Activated T-helper 2 cell treated with anti-CD3 and anti-CD28 coated beads, Interferon-gamma antibody, Interleukin-2, Interleukin-4, amounts not matched to agents 10 μg/mL and 5 μg/mL and 100 μg/mL, durations not matched to agents 14 hours and 24 hours and 36 hours (primary cell): ENCODE measurements at regions of chr15 and their contacts with region 1.

Region 1: GRCh38 chr15:81274931-81275707 is 48.8 kb downstream of the STARD5 start:
- DNase-seq: peak; percentile 74
- H3K4me3 Mint-ChIP-seq: no peak overlapping the region
- H3K27ac Mint-ChIP-seq: peak overlapping the region; percentile 3
- H3K4me1 Mint-ChIP-seq: peaks cover 20% of the 10 kb centered on the region
- H3K27me3 Mint-ChIP-seq: no peaks in the 10 kb centered on the region

Region 2: GRCh38 chr15:80870893-80871292 is 404.2 kb before region 1 on chr15:
- intact Hi-C with region 1: no loop called
- DNase-seq: no peak
- H3K4me3 Mint-ChIP-seq: no peak overlapping the region
- H3K27ac Mint-ChIP-seq: no peak overlapping the region
- H3K4me1 Mint-ChIP-seq: no peaks in the 10 kb centered on the region
- H3K27me3 Mint-ChIP-seq: no peaks in the 10 kb centered on the region

Region 3: DNA sequence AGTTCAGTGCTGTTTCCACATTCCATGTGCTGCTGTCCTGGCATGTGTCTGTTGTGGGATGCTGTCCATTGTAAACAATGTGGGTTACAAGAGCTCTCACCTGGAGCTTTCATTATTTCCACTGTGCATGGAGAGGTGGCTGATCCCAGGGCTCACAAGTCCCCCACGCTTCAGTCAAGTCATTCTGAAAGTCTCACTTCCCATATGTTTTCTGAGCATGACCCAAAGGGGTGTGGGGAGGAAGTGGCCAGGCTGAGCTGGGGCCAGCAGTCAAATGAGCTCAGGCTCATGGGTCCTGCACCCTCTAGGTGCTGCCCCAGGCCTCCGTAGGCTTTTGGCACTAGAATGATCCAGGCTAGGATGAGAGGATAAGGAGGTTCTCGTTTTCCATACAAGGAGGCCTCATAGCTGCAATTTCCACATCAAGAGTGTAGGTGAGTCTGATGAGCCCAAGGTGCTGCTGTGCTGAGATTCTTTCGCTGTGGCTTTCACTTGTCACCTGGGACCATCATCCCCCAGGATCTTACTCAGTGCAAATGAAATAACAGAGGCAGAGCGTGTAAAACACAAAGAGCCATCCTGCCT is 26.8 kb after region 1 on chr15:
- intact Hi-C with region 1: loop called (anchors 2 kb)
- DNase-seq: no peak
- H3K4me3 Mint-ChIP-seq: peak overlapping the region; percentile 96
- H3K27ac Mint-ChIP-seq: peak overlapping the region; percentile 69
- H3K4me1 Mint-ChIP-seq: peaks cover 84% of the 10 kb centered on the region
- H3K27me3 Mint-ChIP-seq: no peaks in the 10 kb centered on the region

Region 4: GRCh38 chr15:81323944-81324881 is 49.1 kb after region 1 on chr15 and contains the start of gene STARD5:
- intact Hi-C with region 1: loop called (anchors 5 kb)
- DNase-seq: peak; percentile 95
- H3K4me3 Mint-ChIP-seq: peak within 1 kb of the TSS; percentile 95
- H3K27ac Mint-ChIP-seq: peak within 1 kb of the TSS; percentile 75
- H3K4me1 Mint-ChIP-seq: peaks cover 20% of the 10 kb centered on the region
- H3K27me3 Mint-ChIP-seq: no peaks in the 10 kb centered on the region
- total RNA-seq, gene STARD5: 3.3 and 4.5 TPM in 2 replicates

Region 5: GRCh38 chr15:81336568-81336967 is 61.4 kb after region 1 on chr15:
- intact Hi-C with region 1: loop called (anchors 1 kb)
- DNase-seq: no peak
- H3K4me3 Mint-ChIP-seq: no peak overlapping the region
- H3K27ac Mint-ChIP-seq: no peak overlapping the region
- H3K4me1 Mint-ChIP-seq: peaks cover 2% of the 10 kb centered on the region
- H3K27me3 Mint-ChIP-seq: peaks cover 9% of the 10 kb centered on the region

Region 6: GRCh38 chr15:81400640-81401236 is 125.6 kb after region 1 on chr15:
- intact Hi-C with region 1: loop called (anchors 1 kb)
- DNase-seq: no peak
- H3K4me3 Mint-ChIP-seq: no peak overlapping the region
- H3K27ac Mint-ChIP-seq: no peak overlapping the region
- H3K4me1 Mint-ChIP-seq: peaks cover 2% of the 10 kb centered on the region
- H3K27me3 Mint-ChIP-seq: peaks cover 12% of the 10 kb centered on the region

Region 7: DNA sequence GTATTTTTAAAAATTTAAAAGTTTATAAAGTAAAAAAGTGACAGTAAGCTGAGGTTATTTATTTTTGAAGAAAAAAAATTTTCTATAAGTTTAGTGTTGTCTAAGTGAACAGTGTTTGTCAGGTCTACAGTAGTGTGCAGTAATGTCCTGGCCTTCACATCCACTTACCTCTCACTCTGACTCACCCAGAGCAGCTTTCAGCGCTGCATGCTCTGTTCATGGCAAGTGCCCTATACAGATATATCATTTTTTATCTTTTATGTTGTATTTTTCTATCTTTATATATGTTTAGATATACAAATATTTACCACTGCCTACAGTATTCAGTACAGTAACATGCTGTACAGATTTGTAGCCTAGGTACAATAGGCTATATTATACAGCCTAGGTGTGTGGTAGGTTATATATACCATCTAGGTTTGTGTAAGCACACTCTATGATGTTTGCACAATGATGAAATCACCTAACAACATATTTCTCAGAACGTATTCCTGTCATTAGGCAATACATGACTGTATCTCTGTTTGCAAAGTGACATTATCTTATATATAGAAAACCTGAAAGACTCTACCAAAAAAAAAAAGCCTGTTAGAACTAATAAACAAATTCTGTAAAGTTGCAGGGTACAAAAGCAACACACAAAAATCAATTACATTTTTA is 174.8 kb after region 1 on chr15:
- intact Hi-C with region 1: no loop called
- DNase-seq: no peak
- H3K4me3 Mint-ChIP-seq: no peak overlapping the region
- H3K27ac Mint-ChIP-seq: no peak overlapping the region
- H3K4me1 Mint-ChIP-seq: peaks cover 4% of the 10 kb centered on the region
- H3K27me3 Mint-ChIP-seq: peaks cover 6% of the 10 kb centered on the region